ENCODE measurements at regions of chr1 and their contacts with region 1.

Region 1: DNA sequence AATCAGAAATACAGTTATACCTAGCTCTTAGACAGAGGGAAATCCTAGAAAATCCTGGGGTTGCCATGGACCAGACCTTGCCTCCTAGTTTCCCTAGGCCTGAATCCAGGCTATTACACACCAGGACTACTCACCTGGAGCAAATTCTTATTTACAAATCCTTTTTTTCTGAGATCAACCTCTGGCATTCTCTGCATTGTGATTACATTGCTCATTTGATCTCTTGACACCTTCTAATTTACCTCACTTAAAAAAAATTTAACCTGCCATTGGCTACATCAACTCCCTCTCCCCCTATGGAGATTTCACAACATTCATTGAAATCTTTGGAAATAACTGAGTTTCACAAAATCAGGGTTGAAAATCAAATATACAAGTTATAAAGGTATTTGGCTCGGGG is 2.9 kb upstream of the C1orf105 start:
- DNase-seq: no peak
- H3K4me3 ChIP-seq: no peak overlapping the region
- H3K27ac ChIP-seq: no peak overlapping the region
- H3K4me1 ChIP-seq: peaks cover 7% of the 10 kb centered on the region
- H3K27me3 ChIP-seq: no peaks in the 10 kb centered on the region
- CTCF ChIP-seq: no peak

Region 2: DNA sequence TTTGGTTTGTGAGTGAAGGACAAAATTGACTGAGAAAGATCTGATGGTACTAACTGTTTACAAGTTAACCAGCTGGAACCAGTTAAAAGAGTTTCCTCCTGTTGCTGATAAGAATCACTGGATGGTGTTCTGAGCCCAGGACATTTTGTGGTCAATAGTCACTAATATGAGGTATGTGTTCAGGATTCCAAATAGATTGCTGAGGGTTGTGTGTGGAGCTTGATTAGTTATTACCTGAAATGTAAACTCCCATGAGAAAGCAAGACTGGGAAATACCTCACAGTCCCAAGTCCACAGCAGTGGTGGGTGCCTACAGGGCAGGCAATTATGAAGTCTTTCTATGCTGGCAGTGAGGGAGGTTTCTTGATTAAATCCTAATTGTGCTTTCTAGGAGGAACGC is 411.7 kb before region 1 on chr1:
- intact Hi-C with region 1: loop called (anchors 5 kb)
- DNase-seq: no peak
- H3K4me3 ChIP-seq: no peak overlapping the region
- H3K27ac ChIP-seq: no peak overlapping the region
- H3K4me1 ChIP-seq: no peaks in the 10 kb centered on the region
- H3K27me3 ChIP-seq: no peaks in the 10 kb centered on the region
- CTCF ChIP-seq: no peak